Transverse colon (tissue), 4 donors: ENCODE measurements at regions of chr9 and their contacts with region 1.

Region 1: GRCh38 chr9:13427587-13427986 is 148.1 kb upstream of the MPDZ start:
- DNase-seq: no peak
- H3K4me3 ChIP-seq: no peak overlapping the region
- H3K27ac ChIP-seq: no peak overlapping the region
- H3K4me1 ChIP-seq: peaks cover 0 to 3% (median 0%) of the 10 kb centered on the region in 4 donors
- H3K27me3 ChIP-seq: no peaks in the 10 kb centered on the region
- CTCF ChIP-seq: peak; percentile 69 to 84 (median 74)
- EP300 ChIP-seq: no peak
- POLR2A ChIP-seq: no peak

Region 2: DNA sequence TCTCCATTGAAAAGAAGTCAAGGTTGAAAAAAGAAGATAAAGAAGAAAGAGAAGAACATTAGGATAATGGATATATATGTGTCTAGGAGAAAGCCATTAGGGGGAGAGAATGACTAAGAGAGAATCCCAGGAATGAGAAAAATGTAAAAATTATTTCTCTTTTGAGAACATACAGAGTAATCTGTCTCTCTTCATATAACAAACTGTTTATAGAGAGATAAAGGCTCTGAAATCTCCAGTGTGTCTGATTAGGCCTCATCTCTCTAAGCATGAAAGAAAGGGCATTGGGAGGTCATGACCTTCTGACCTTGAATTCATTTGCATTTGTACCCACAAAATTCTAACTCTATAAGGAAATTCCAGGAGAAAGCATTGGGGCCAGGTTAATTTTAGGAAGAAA is 144.6 kb before region 1 on chr9:
- in situ Hi-C with region 1: no loop called
- intact Hi-C with region 1: no loop called
- DNase-seq: no peak
- H3K4me3 ChIP-seq: no peak overlapping the region
- H3K27ac ChIP-seq: no peak overlapping the region
- H3K4me1 ChIP-seq: peaks cover 0 to 4% (median 0%) of the 10 kb centered on the region in 4 donors
- H3K27me3 ChIP-seq: peaks cover 20% of the 10 kb centered on the region
- CTCF ChIP-seq: no peak
- EP300 ChIP-seq: no peak
- POLR2A ChIP-seq: no peak

Region 3: GRCh38 chr9:13351778-13352386 is 75.7 kb before region 1 on chr9:
- in situ Hi-C with region 1: no loop called
- intact Hi-C with region 1: no loop called
- DNase-seq: no peak
- H3K4me3 ChIP-seq: no peak overlapping the region
- H3K27ac ChIP-seq: no peak overlapping the region
- H3K4me1 ChIP-seq: no peaks in the 10 kb centered on the region
- H3K27me3 ChIP-seq: no peaks in the 10 kb centered on the region
- CTCF ChIP-seq: peak; percentile 16 to 51 (median 43)
- EP300 ChIP-seq: no peak
- POLR2A ChIP-seq: no peak

Region 4: DNA sequence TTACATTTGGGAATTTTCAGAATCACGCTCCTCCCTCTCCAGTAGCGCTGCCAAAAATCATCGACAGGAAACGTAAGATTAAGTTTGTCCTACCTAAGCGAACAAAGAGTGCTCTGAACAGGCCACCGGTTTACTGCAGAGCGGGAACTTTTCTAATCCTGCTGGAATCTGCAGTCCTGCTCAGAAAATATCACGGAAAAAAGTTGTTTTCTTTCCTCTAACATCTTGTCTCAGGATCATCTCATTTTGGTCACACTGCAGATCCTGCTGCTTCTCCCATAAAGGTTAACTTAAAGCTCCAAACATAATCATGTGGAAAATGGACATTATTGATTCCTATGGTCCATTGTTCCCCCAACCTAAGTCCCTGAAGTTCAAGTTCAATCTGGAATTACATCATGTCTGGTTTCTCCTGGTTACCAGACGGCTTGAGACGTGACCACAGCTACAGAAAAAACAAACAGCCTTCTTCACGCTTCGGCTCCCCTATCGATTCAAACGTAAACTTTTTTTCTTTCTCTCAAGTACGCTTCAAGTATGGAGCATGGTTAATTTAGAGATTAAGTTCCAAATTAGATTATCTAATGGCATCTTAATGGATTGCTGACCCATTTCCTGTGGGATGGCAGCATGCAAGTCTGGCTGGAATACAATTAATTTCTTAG is 668.8 kb after region 1 on chr9:
- in situ Hi-C with region 1: loop called in 1 of 4 experiments (anchors 25 kb)
- intact Hi-C with region 1: no loop called
- DNase-seq: no peak
- H3K4me3 ChIP-seq: no peak overlapping the region
- H3K27ac ChIP-seq: peak overlapping the region; percentile 51 to 64 (median 57)
- H3K4me1 ChIP-seq: peaks cover 0 to 26% (median 2%) of the 10 kb centered on the region in 4 donors
- H3K27me3 ChIP-seq: no peaks in the 10 kb centered on the region
- CTCF ChIP-seq: no peak
- EP300 ChIP-seq: no peak
- POLR2A ChIP-seq: no peak

Region 5: GRCh38 chr9:14353222-14354056 is 925.9 kb after region 1 on chr9:
- in situ Hi-C with region 1: loop called in 3 of 4 experiments (anchors 5 to 10 kb)
- intact Hi-C with region 1: loop called (anchors 1 kb)
- DNase-seq: peak; percentile 90
- H3K4me3 ChIP-seq: peak overlapping the region in 1 of 4 donors; percentile 12
- H3K27ac ChIP-seq: peak overlapping the region in 3 of 4 donors; percentile 7 to 33 (median 14)
- H3K4me1 ChIP-seq: peaks cover 8 to 25% (median 16%) of the 10 kb centered on the region in 4 donors
- H3K27me3 ChIP-seq: peaks cover 48% of the 10 kb centered on the region
- CTCF ChIP-seq: peak; percentile 85 to 91 (median 87)
- EP300 ChIP-seq: no peak
- POLR2A ChIP-seq: no peak

Region 6: GRCh38 chr9:14383294-14383693 is 955.7 kb after region 1 on chr9:
- in situ Hi-C with region 1: loop called in 1 of 4 experiments (anchors 25 kb)
- intact Hi-C with region 1: no loop called
- DNase-seq: no peak
- H3K4me3 ChIP-seq: no peak overlapping the region
- H3K27ac ChIP-seq: no peak overlapping the region
- H3K4me1 ChIP-seq: no peaks in the 10 kb centered on the region
- H3K27me3 ChIP-seq: no peaks in the 10 kb centered on the region
- CTCF ChIP-seq: no peak
- EP300 ChIP-seq: no peak
- POLR2A ChIP-seq: no peak

Region 7: GRCh38 chr9:14433351-14434157 is 1006.0 kb after region 1 on chr9:
- in situ Hi-C with region 1: loop called in 1 of 4 experiments (anchors 10 kb)
- intact Hi-C with region 1: no loop called
- DNase-seq: no peak
- H3K4me3 ChIP-seq: no peak overlapping the region
- H3K27ac ChIP-seq: no peak overlapping the region
- H3K4me1 ChIP-seq: peaks cover 0 to 4% (median 2%) of the 10 kb centered on the region in 4 donors
- H3K27me3 ChIP-seq: no peaks in the 10 kb centered on the region
- CTCF ChIP-seq: no peak
- EP300 ChIP-seq: no peak
- POLR2A ChIP-seq: no peak